ENCODE measurements at regions of chr7 and their contacts with region 1.

Region 1: GRCh38 chr7:110548372-110548771 is 542.6 kb upstream of the LRRN3 start:
- DNase-seq: no peak
- ATAC-seq: no peak
- H3K4me3 ChIP-seq: no peak overlapping the region
- H3K27ac ChIP-seq: no peak overlapping the region
- H3K4me1 ChIP-seq: no peaks in the 10 kb centered on the region
- H3K27me3 ChIP-seq: no peaks in the 10 kb centered on the region
- CTCF ChIP-seq: no peak
- POLR2A ChIP-seq: no peak

Region 2: DNA sequence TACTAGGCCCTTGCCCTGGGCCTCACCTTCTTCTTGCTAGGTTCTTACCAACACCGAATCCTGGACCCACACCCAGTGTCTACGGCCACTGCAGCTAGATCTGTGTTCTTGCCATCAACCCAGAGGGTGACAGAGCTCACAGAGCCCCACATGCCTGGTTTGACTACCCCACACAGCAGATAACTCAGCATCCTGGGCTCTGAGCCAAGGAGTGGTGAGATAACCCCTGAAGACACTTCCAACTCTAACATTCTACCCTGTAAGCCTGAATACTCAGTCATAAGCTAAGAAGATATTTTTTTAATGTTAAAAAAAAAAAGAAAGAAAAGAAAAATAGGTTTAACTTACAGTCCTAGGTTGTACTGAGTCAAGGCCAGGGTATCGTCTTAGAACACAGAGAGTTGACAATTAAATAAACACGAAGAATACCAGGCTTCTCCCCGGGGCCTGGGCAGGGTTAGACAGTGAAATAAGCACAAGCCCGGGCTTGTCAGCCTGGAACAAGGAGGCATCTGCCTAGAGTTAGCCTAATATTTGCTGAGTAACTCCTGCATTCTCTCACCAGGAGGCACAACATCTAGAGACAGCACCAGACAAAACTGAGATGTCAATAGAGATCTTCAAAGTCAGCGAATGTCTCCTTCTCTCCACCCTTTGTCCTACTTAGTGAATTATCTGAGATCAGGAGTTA is 14.0 kb before region 1 on chr7:
- intact Hi-C with region 1: loop called in 1 of 10 experiments (anchors 1 kb)
- DNase-seq: peak in 2 of 5 donors; percentile 28 to 60
- ATAC-seq: peak; percentile 43 to 64 (median 48)
- H3K4me3 ChIP-seq: no peak overlapping the region
- H3K27ac ChIP-seq: no peak overlapping the region
- H3K4me1 ChIP-seq: peaks cover 0 to 11% (median 2%) of the 10 kb centered on the region in 12 donors
- H3K27me3 ChIP-seq: no peaks in the 10 kb centered on the region
- CTCF ChIP-seq: no peak
- POLR2A ChIP-seq: no peak

Region 3: GRCh38 chr7:110759069-110759468 is 210.7 kb after region 1 on chr7:
- intact Hi-C with region 1: no loop called
- DNase-seq: no peak
- ATAC-seq: no peak
- H3K4me3 ChIP-seq: no peak overlapping the region
- H3K27ac ChIP-seq: no peak overlapping the region
- H3K4me1 ChIP-seq: peaks cover 0 to 2% (median 0%) of the 10 kb centered on the region in 12 donors
- H3K27me3 ChIP-seq: no peaks in the 10 kb centered on the region
- CTCF ChIP-seq: no peak
- POLR2A ChIP-seq: no peak